GM23248 (cell line): ENCODE measurements at regions of chr12 and their contacts with region 1.

Region 1: GRCh38 chr12:10235761-10236631 is 23.3 kb downstream of the GABARAPL1 start:
- DNase-seq: peak; percentile 61
- H3K4me3 ChIP-seq: no peak overlapping the region
- H3K27ac ChIP-seq: no peak overlapping the region
- H3K4me1 ChIP-seq: peaks cover 2% of the 10 kb centered on the region
- H3K27me3 ChIP-seq: no peaks in the 10 kb centered on the region

Region 2: DNA sequence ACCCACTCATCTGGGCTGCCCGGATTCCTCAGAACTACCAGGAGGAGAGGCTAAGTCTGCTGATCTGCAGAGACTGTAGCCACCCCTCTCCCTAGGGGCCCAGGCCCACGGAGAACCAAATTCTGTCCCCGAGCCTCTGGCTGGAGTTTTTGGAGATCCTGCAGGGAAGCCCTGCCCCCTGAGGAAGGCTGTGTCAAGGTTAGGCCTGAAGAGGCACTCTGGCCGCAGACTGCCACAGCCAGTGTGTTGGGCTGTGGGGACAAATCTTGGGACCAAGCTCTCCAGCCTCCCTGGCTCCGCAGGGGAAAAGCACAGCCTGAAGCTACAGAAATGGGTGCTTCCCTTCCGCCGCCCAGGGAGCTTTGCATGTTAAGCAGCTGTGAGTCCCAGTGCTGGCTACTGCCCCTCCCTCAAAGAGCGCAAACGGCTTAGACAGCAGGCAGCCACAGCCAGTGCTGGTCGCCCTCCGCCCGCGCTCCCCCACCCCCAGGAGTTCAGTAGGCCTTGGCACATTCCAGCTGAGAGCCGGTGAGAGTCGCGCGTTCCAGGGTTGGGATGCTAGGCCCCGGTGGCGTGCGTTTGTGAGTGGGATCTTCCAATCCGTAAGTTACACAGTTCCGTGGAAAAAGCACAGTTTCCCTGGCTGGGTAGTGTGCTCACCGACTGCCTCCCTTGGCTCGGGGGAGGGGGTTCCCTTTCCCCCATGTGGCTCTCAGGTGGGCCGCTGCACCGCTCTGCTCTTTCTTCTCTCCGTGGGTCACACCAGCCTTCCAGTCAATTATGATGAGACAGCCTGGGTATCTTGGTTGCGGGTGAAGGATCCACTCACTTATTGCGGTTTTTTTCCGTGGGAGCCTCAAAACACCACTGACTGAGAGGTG is 1708.5 kb before region 1 on chr12:
- in situ Hi-C with region 1: no loop called
- DNase-seq: no peak
- H3K4me3 ChIP-seq: no peak overlapping the region
- H3K27ac ChIP-seq: no peak overlapping the region
- H3K4me1 ChIP-seq: no peaks in the 10 kb centered on the region
- H3K27me3 ChIP-seq: 0 out of 2 replicates have a peak, but pooled peaks cover 9% of the 10 kb centered on the region

Region 3: DNA sequence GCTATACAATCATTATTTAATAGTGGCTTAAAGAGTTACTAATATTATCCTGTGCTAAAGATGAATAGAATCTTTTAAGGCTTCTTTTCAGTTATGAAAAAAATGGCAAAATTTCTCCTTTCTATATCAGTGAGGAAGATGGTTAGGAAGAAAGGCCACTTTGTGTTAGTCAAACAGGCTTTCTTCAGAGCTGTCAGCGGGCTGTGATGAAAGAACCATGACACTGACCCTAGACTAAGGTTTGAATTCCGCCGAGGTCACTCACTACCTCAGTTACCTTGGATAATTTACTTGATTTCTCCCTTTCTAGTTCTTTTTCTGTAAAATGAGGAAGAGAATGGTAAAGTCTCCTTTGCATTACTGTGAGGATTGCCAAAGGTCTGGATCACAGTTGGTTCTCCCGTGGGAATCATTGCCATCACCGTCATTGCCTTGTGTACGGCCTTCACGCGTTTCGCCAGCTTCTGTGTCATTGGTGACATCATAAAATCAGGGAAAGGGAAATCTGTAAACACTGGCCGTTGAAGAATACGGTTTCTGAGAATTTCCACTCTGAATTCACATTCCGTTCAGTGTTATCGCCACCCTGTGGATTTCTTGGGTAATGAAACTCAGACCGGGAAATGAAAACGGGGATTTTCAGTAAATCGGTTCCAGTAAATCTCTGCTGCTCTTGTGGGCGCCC is 513.8 kb after region 1 on chr12:
- in situ Hi-C with region 1: loop called (anchors 10 kb)
- DNase-seq: peak; percentile 96
- H3K4me3 ChIP-seq: peak overlapping the region; percentile 55
- H3K27ac ChIP-seq: peak overlapping the region; percentile 32
- H3K4me1 ChIP-seq: peaks cover 13% of the 10 kb centered on the region
- H3K27me3 ChIP-seq: no peaks in the 10 kb centered on the region; the same call in 1 of the 2 replicates